Activated T-helper 1 cell treated with anti-CD3 and anti-CD28 coated beads, Interleukin-12 subunit alpha, Interleukin-12 subunit beta, Interleukin-2, Interleukin-4 antibody, amounts not matched to agents 30 ng/mL and 10 ng/mL and 1 ng/mL, durations not matched to agents 14 hours and 24 hours and 36 hours (primary cell): ENCODE measurements at regions of chr12 and their contacts with region 1.

Region 1: GRCh38 chr12:110431957-110432587 is 18.1 kb downstream of the ARPC3 start:
- DNase-seq: no peak
- H3K4me3 Mint-ChIP-seq: no peak overlapping the region
- H3K27ac Mint-ChIP-seq: no peak overlapping the region
- H3K4me1 Mint-ChIP-seq: no peaks in the 10 kb centered on the region
- H3K27me3 Mint-ChIP-seq: peaks cover 4% of the 10 kb centered on the region

Region 2: DNA sequence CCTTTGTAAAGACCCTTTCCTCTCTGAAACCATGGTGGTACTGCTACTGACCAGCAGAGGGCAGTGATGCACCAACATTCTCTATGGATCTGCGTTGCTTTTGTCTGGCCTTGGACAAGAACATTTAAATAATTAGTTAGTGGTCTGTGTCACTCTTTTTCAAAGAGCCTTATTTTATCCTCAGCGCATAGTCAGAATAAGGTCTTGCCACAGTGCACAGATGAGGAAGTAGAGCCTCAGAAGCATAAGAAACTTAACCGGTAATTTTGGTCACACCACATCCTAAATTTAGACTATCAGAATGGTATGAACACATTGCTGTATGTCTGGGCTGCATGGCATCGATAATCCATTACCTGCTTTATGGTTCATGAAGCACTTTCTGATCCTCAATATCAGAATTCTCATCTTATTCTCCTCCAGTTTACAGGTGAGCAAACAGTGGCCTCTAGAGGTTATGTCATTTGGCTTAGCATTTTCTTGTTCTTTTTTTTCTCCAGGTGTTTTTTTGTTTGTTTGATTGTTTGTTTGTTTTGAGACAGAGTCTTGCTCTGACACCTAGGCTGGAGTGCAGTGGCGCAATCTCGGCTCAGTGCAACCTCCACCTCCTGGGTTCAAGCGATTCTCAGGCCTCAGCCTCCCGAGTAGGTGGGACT is 331.6 kb before region 1 on chr12:
- intact Hi-C with region 1: loop called (anchors 1 kb)
- DNase-seq: peak; percentile 39
- H3K4me3 Mint-ChIP-seq: no peak overlapping the region
- H3K27ac Mint-ChIP-seq: no peak overlapping the region
- H3K4me1 Mint-ChIP-seq: peaks cover 9% of the 10 kb centered on the region
- H3K27me3 Mint-ChIP-seq: no peaks in the 10 kb centered on the region

Region 3: DNA sequence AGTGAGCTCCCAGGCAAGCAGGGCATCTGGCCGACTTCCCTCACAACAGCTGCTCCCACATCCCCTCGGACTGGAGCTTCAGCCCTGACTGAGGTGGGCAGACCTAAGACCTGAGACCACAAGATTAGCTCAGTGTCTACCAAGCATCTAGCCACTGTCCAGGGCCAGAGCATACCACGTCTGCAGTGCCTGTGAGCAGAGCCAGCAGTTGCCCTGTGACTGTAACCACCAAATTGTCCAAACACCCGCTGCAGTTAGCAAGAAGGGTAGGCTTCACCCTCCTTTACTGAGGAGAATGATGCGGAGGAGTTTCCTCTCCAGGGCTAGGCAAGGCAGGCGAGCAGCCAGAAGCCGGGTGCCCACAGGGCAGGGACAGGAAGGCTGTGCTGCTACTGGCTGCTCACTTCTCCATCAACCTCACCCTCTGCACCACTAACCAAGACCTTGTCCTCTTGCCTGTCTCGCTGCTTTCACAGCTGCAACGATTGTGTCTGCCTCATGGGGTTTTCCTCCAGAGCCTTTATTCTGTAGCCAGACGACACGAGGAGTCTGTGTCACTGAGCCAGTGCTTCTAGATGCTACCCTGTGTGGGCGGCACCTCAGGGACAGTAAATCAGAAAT is 82.4 kb before region 1 on chr12:
- intact Hi-C with region 1: loop called (anchors 1 kb)
- DNase-seq: peak; percentile 55
- H3K4me3 Mint-ChIP-seq: peak overlapping the region; percentile 54
- H3K27ac Mint-ChIP-seq: peak overlapping the region; percentile 88
- H3K4me1 Mint-ChIP-seq: peaks cover 45% of the 10 kb centered on the region
- H3K27me3 Mint-ChIP-seq: no peaks in the 10 kb centered on the region

Region 4: GRCh38 chr12:110355073-110355472 is 77.0 kb before region 1 on chr12:
- intact Hi-C with region 1: loop called (anchors 1 kb)
- DNase-seq: no peak
- H3K4me3 Mint-ChIP-seq: no peak overlapping the region
- H3K27ac Mint-ChIP-seq: no peak overlapping the region
- H3K4me1 Mint-ChIP-seq: peaks cover 29% of the 10 kb centered on the region
- H3K27me3 Mint-ChIP-seq: no peaks in the 10 kb centered on the region

Region 5: GRCh38 chr12:110403146-110403975 is 28.7 kb before region 1 on chr12 and contains the start of gene ANAPC7:
- intact Hi-C with region 1: loop called (anchors 1 kb)
- DNase-seq: peak; percentile 81
- H3K4me3 Mint-ChIP-seq: peak within 1 kb of the TSS; percentile 100
- H3K27ac Mint-ChIP-seq: peak within 1 kb of the TSS; percentile 97
- H3K4me1 Mint-ChIP-seq: peaks cover 25% of the 10 kb centered on the region
- H3K27me3 Mint-ChIP-seq: no peaks in the 10 kb centered on the region
- total RNA-seq, gene ANAPC7: 72.0 and 72.6 TPM in 2 replicates

Region 6: GRCh38 chr12:110853836-110854235 is 421.8 kb after region 1 on chr12:
- intact Hi-C with region 1: no loop called
- DNase-seq: no peak
- H3K4me3 Mint-ChIP-seq: no peak overlapping the region
- H3K27ac Mint-ChIP-seq: no peak overlapping the region
- H3K4me1 Mint-ChIP-seq: no peaks in the 10 kb centered on the region
- H3K27me3 Mint-ChIP-seq: peaks cover 16% of the 10 kb centered on the region